ENCODE measurements at regions of chr5 and their contacts with region 1.

Region 1: DNA sequence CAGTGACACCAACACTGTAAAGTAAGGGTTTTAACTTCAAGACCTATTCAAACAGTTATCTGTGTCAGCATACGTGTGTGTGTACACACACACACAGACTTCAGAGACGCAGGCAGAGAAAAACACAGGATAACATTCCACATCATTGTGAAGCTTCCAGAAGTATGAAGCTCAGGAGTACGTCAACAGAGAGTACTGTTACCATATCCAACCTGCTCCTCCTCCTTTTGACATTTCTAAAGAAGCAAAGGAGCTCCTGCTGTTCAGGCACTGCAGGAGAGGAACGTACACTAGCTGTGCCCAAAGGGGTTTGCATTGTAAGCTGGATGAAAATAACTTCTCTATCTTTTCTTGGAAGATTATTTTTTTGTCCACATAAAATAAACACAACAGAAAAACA is 180.7 kb downstream of the MEF2C start:
- DNase-seq: no peak
- ATAC-seq: peak; percentile 91
- H3K4me3 Mint-ChIP-seq: no peak overlapping the region
- H3K27ac Mint-ChIP-seq: no peak overlapping the region
- H3K4me1 Mint-ChIP-seq: peaks cover 26% of the 10 kb centered on the region
- H3K27me3 Mint-ChIP-seq: peaks cover 32% of the 10 kb centered on the region
- CTCF ChIP-seq: no peak

Region 2: DNA sequence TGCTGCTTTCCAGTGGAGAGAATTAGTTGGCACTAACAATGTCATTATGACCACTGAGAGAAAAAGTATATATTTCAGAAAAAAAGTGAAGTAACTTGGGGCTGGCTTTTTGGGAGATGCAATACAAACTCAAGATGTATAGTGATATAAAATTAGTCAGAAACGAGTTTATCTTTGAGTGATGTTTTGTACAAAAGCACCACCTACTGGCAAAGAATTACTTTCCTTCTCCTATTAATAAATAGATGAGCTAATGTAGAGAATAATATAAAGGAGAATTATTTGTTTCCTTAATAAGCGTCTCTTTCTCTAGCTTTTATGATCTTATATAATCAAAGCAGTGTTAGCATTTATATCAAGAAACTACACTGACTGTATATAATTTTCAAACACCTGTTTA is 21.9 kb after region 1 on chr5:
- CTCF ChIA-PET with region 1: interaction called, 33 read pairs
- POLR2A ChIA-PET with region 1: no interaction called
- DNase-seq: no peak
- ATAC-seq: no peak
- H3K4me3 Mint-ChIP-seq: no peak overlapping the region
- H3K27ac Mint-ChIP-seq: no peak overlapping the region
- H3K4me1 Mint-ChIP-seq: peaks cover 18% of the 10 kb centered on the region
- H3K27me3 Mint-ChIP-seq: peaks cover 19% of the 10 kb centered on the region
- CTCF ChIP-seq: no peak